ENCODE measurements at regions of chr3 and their contacts with region 1.

Region 1: GRCh38 chr3:108489771-108490170 is 20.6 kb downstream of the MYH15 start:
- DNase-seq: peak; percentile 52
- ATAC-seq: peak; percentile 80
- H3K4me3 ChIP-seq: no peak overlapping the region
- H3K27ac ChIP-seq: no peak overlapping the region
- H3K4me1 ChIP-seq: peaks cover 0 to 5% of the 10 kb centered on the region in 2 experiments; a peak in 1 of 4 replicates
- H3K27me3 ChIP-seq: no peaks in the 10 kb centered on the region
- CTCF ChIP-seq: peak; percentile 64 to 90 (median 78)
- POLR2A ChIP-seq: no peak
- RAD21 ChIP-seq: peak; percentile 92

Region 2: DNA sequence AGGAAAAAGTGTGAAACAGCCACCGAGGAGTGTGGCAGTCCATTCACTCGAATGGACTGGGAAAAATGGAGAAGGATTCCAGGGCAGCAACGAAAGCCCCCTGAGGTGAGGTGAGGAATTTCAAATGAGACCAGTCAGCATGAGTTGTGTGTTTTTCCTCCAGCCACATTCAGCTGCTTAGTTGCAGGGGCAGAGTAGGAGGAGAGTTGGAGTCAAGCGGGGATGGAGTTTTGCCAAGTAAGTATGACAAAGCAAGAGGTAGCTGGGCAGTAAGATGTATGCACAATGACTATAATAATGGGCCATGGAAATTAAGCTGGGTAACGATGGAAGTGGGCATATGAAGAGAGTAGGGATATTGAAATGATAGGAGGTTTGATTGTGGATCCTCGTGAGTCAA is 1048.2 kb before region 1 on chr3:
- CTCF ChIA-PET with region 1: no interaction called
- POLR2A ChIA-PET with region 1: no interaction called
- RAD21 ChIA-PET with region 1: no interaction called
- intact Hi-C with region 1: no loop called
- DNase-seq: no peak
- ATAC-seq: no peak
- H3K4me3 ChIP-seq: no peak overlapping the region
- H3K27ac ChIP-seq: no peak overlapping the region
- H3K4me1 ChIP-seq: no peaks in the 10 kb centered on the region
- H3K27me3 ChIP-seq: no peaks in the 10 kb centered on the region
- CTCF ChIP-seq: no peak
- POLR2A ChIP-seq: no peak
- RAD21 ChIP-seq: no peak

Region 3: DNA sequence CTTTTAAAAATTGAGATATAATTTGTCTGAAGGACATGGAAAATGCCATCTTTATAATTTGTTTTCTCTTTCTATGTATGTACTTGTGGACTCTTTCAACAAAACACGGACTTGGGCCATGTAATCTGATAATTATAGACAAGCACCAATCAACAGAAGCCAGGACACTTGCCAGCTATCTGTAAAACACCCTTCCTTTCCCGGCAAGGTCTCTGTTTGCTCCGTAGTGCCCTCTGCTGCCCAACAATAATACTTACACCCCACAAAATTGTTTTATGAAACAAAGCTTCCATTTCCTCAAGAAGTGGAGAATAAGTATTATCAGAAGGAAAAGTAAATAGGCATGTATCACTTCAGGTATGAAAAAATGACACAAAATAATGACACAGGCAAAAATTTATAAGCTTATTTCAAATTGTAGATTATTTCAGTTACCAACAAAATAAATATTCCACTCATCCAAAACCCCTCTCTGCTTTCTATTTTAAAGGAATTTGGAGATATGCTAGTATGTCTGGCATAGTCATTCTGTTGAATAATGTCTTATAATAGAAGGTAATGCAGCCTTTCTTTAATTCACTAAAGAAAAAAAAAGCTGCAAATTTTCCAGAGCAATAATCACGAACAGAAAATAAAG is 12.1 kb before region 1 on chr3:
- CTCF ChIA-PET with region 1: interaction called, 28 read pairs
- POLR2A ChIA-PET with region 1: no interaction called
- RAD21 ChIA-PET with region 1: no interaction called
- intact Hi-C with region 1: no loop called
- DNase-seq: peak; percentile 72
- ATAC-seq: peak; percentile 73
- H3K4me3 ChIP-seq: no peak overlapping the region
- H3K27ac ChIP-seq: no peak overlapping the region
- H3K4me1 ChIP-seq: peaks cover 15 to 36% of the 10 kb centered on the region in 2 experiments
- H3K27me3 ChIP-seq: no peaks in the 10 kb centered on the region
- CTCF ChIP-seq: peak; percentile 65 to 75 (median 71); a peak in 5 of 6 replicates
- POLR2A ChIP-seq: no peak
- RAD21 ChIP-seq: peak; percentile 80

Region 4: GRCh38 chr3:108552267-108553159 is 62.7 kb after region 1 on chr3:
- CTCF ChIA-PET with region 1: interaction called, 12 read pairs
- POLR2A ChIA-PET with region 1: no interaction called
- RAD21 ChIA-PET with region 1: interaction called in 1 of 2 experiments, 3 read pairs
- intact Hi-C with region 1: loop called (anchors 1 kb)
- DNase-seq: peak; percentile 19
- ATAC-seq: peak; percentile 59
- H3K4me3 ChIP-seq: no peak overlapping the region
- H3K27ac ChIP-seq: no peak overlapping the region
- H3K4me1 ChIP-seq: no peaks in the 10 kb centered on the region
- H3K27me3 ChIP-seq: no peaks in the 10 kb centered on the region
- CTCF ChIP-seq: peak; percentile 23 to 63 (median 26); a peak in 4 of 6 replicates
- POLR2A ChIP-seq: no peak
- RAD21 ChIP-seq: peak; percentile 51

Region 5: DNA sequence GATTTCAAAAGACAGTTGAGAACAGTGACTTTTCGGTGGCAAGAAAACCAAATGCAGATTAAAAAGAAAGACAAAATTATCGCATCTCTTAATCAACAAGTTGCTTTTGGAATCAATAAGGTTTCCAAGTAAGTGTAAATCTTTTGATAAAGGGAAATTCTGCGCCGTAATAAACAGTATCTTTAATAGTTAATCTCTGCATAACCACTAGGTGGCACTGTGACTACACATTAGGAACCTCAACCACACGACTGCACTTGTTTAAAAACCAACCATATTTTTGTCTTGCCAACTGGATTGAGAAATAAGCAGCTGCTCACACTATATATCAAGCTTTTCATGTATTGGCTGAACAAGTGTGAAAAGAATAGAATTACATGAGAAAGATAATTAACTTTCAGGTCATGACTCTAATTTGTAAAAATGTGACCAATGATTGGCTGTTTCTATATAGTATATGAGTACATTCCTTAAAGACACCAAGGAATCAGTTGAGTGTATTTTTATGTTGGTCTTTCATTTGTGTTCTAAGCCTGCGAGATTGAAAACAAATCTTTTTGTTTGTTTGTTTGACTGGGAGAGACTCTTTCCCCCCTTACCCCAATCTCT is 172.5 kb after region 1 on chr3:
- CTCF ChIA-PET with region 1: no interaction called
- POLR2A ChIA-PET with region 1: no interaction called
- RAD21 ChIA-PET with region 1: no interaction called
- intact Hi-C with region 1: loop called (anchors 5 kb)
- DNase-seq: peak; percentile 43
- ATAC-seq: peak; percentile 57; the same call in 1 of the 2 replicates
- H3K4me3 ChIP-seq: no peak overlapping the region
- H3K27ac ChIP-seq: no peak overlapping the region
- H3K4me1 ChIP-seq: no peaks in the 10 kb centered on the region
- H3K27me3 ChIP-seq: no peaks in the 10 kb centered on the region
- CTCF ChIP-seq: peak; percentile 48 to 85 (median 77)
- POLR2A ChIP-seq: no peak
- RAD21 ChIP-seq: peak; percentile 84

Region 6: DNA sequence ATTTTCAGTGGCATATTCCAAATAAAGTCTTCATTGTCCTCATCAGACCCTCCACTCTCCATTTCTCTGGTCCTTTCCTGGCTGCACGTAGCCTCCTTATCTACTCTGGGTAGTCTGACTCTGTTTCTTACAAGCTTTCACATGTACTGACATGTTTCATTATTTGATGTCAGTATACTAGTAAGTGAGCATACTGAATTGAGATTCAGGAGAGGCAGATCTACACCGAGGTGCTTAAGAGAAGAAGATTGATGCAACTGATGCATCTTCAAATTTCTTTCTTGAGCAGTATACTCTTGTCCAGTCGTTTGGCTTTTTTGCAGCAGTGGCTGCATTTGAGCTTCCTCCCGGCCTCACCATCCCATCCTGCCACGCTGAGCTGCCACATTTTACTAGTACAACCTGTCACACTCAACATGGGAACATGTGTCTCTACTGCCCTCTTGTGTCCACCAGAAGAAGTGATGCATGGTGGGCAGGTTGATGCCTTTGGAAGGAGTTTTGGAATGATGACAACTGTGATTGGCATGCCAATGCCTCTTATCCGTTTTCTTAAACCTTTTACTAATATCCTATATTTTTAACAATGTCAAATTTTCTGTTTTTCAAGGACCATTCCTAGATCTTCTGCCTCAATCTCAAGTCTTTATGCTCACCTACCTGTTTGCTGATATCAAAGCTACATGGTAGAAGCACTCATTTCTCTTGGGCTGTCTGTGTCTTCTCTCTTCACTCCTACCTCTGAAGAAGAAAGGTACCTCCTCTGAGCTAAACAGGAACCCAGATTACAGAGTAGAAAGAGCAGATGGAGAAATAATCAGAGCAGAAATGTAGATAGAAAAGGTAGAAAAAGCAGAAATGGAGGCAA is 425.2 kb after region 1 on chr3:
- CTCF ChIA-PET with region 1: interaction called, 6 read pairs
- POLR2A ChIA-PET with region 1: no interaction called
- RAD21 ChIA-PET with region 1: interaction called in 1 of 2 experiments, 3 read pairs
- intact Hi-C with region 1: loop called (anchors 1 kb)
- DNase-seq: peak; percentile 69
- ATAC-seq: peak; percentile 91
- H3K4me3 ChIP-seq: no peak overlapping the region
- H3K27ac ChIP-seq: no peak overlapping the region
- H3K4me1 ChIP-seq: peaks cover 4 to 23% of the 10 kb centered on the region in 2 experiments; a peak in 3 of 4 replicates
- H3K27me3 ChIP-seq: no peaks in the 10 kb centered on the region
- CTCF ChIP-seq: peak; percentile 56 to 93 (median 86); a peak in 5 of 6 replicates
- POLR2A ChIP-seq: no peak
- RAD21 ChIP-seq: peak; percentile 89

Region 7: GRCh38 chr3:109081746-109082510 is 592.2 kb after region 1 on chr3:
- CTCF ChIA-PET with region 1: no interaction called
- POLR2A ChIA-PET with region 1: no interaction called
- RAD21 ChIA-PET with region 1: interaction called in 1 of 2 experiments, 3 read pairs
- intact Hi-C with region 1: loop called (anchors 5 kb)
- DNase-seq: peak; percentile 48
- ATAC-seq: peak; percentile 91
- H3K4me3 ChIP-seq: no peak overlapping the region
- H3K27ac ChIP-seq: no peak overlapping the region
- H3K4me1 ChIP-seq: no peaks in the 10 kb centered on the region; a peak in 1 of 4 replicates
- H3K27me3 ChIP-seq: no peaks in the 10 kb centered on the region
- CTCF ChIP-seq: peak; percentile 59 to 90 (median 77); a peak in 5 of 6 replicates
- POLR2A ChIP-seq: no peak
- RAD21 ChIP-seq: peak; percentile 74

Region 8: GRCh38 chr3:109224333-109224732 is 734.6 kb after region 1 on chr3:
- CTCF ChIA-PET with region 1: no interaction called
- POLR2A ChIA-PET with region 1: no interaction called
- RAD21 ChIA-PET with region 1: no interaction called
- intact Hi-C with region 1: loop called (anchors 10 kb)
- DNase-seq: peak; percentile 6
- ATAC-seq: peak; percentile 89
- H3K4me3 ChIP-seq: no peak overlapping the region
- H3K27ac ChIP-seq: no peak overlapping the region
- H3K4me1 ChIP-seq: no peaks in the 10 kb centered on the region
- H3K27me3 ChIP-seq: no peaks in the 10 kb centered on the region
- CTCF ChIP-seq: peak; percentile 36 to 88 (median 82); a peak in 5 of 6 replicates
- POLR2A ChIP-seq: no peak
- RAD21 ChIP-seq: peak; percentile 62